K562 (cell line): ENCODE measurements at regions of chr3 and their contacts with region 1.

Region 1: GRCh38 chr3:33717866-33718594 is at the start of gene CLASP2:
- DNase-seq: peak; percentile 93 to 96 (median 94)
- ATAC-seq: peak; percentile 92
- H3K4me3 ChIP-seq: peak within 1 kb of the TSS; percentile 75
- H3K27ac ChIP-seq: peak within 1 kb of the TSS; percentile 88
- H3K4me1 ChIP-seq: peaks cover 5 to 14% of the 10 kb centered on the region in 2 experiments; a peak in 4 of 5 replicates
- H3K27me3 ChIP-seq: no peaks in the 10 kb centered on the region
- CTCF ChIP-seq: peak in 1 of 3 experiments; percentile 1; a peak in 1 of 6 replicates
- EP300 ChIP-seq: peak; percentile 40
- POLR2A ChIP-seq: peak; percentile 93
- RAD21 ChIP-seq: 0 out of 4 replicates have a peak, but pooled peaks of 1 of the 2 experiments have one; percentile 8
- polyA plus RNA-seq, gene CLASP2: 13.5 to 17.4 TPM

Region 2: DNA sequence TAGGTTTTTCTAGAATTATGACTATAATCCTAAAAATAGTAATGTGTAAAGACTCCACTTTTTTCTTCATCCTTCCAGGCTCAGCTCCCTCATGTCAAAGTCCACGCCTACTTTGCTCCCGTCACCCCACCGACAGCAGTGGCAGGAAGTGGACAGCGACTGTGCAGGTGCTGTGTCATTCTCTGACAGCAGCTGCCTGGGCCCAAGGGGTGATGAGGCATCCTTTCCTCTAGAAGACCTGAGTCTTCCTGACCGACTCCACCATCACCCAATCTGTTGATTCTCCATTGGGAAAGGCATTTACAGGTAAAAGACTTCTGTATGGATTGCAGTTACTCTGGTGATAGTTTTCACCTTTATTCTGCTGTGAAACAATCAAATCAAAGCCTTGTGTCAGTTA is 332.6 kb before region 1 on chr3:
- CTCF ChIA-PET with region 1: no interaction called
- POLR2A ChIA-PET with region 1: no interaction called
- in situ Hi-C with region 1: no loop called
- intact Hi-C with region 1: loop called (anchors 2 kb)
- DNase-seq: peak; percentile 63 to 89 (median 76)
- ATAC-seq: peak; percentile 99
- H3K4me3 ChIP-seq: no peak overlapping the region
- H3K27ac ChIP-seq: peak overlapping the region; percentile 69
- H3K4me1 ChIP-seq: peaks cover 0 to 15% of the 10 kb centered on the region in 2 experiments; a peak in 3 of 5 replicates
- H3K27me3 ChIP-seq: no peaks in the 10 kb centered on the region
- CTCF ChIP-seq: no peak
- EP300 ChIP-seq: peak; percentile 48; the same call in 1 of the 2 replicates
- POLR2A ChIP-seq: peak; percentile 52
- RAD21 ChIP-seq: no peak

Region 3: DNA sequence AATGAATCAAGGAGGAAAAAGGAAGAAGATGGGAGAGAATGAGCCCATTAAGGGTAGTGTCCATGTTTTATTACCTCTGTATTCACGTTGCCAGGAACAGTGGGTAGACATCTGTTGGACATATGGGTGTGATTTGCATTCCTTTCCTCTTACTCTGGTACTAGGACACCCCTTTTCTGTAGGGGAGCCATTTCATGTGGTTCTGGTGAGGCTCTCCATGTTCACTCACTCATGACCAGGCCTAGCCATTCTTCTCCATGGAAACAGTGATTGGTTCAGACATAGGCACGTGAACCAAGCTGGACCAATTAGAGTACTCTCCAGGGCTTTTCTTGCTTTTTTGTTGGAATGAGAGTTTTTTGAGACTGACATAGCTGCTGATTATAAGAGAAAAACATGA is 40.8 kb after region 1 on chr3:
- CTCF ChIA-PET with region 1: no interaction called
- POLR2A ChIA-PET with region 1: no interaction called
- in situ Hi-C with region 1: no loop called
- intact Hi-C with region 1: no loop called
- DNase-seq: no peak
- ATAC-seq: peak; percentile 70
- H3K4me3 ChIP-seq: no peak overlapping the region
- H3K27ac ChIP-seq: no peak overlapping the region
- H3K4me1 ChIP-seq: no peaks in the 10 kb centered on the region
- H3K27me3 ChIP-seq: no peaks in the 10 kb centered on the region
- CTCF ChIP-seq: no peak
- EP300 ChIP-seq: no peak
- POLR2A ChIP-seq: no peak
- RAD21 ChIP-seq: no peak

Region 4: DNA sequence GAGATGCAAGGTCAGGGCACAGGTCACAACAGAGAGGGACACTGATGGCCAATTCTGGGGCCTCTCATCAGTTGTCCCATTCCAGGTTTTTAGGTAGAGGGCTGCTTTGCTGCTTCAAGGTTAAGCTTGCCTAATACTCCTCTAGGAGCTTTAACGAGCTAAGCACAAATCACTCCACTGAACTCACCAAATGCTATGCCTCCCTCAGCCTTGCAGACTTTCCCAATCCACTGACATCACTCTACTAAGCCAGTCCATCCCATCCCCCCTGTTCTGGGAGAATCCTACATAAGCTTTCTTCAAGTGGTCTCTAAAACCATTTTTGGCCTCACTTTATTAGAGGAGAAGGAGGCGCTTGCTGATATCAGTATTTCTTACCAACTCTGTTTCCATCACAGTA is 55.6 kb after region 1 on chr3:
- CTCF ChIA-PET with region 1: no interaction called
- POLR2A ChIA-PET with region 1: interaction called, 3 read pairs
- in situ Hi-C with region 1: no loop called
- intact Hi-C with region 1: loop called (anchors 1 kb)
- DNase-seq: no peak
- ATAC-seq: no peak; the same call in 2 of the 3 replicates
- H3K4me3 ChIP-seq: no peak overlapping the region
- H3K27ac ChIP-seq: no peak overlapping the region
- H3K4me1 ChIP-seq: peaks cover 0 to 13% of the 10 kb centered on the region in 2 experiments; a peak in 3 of 5 replicates
- H3K27me3 ChIP-seq: no peaks in the 10 kb centered on the region
- CTCF ChIP-seq: no peak
- EP300 ChIP-seq: no peak
- POLR2A ChIP-seq: no peak
- RAD21 ChIP-seq: no peak